H1 (cell line): ENCODE measurements at regions of chr1 and their contacts with region 1.

Region 1: GRCh38 chr1:206734499-206735142 is 36.0 kb upstream of the IL19 start:
- DNase-seq: peak in 1 of 2 experiments; percentile 94
- H3K4me3 ChIP-seq: no peak overlapping the region
- H3K27ac ChIP-seq: no peak overlapping the region
- H3K4me1 ChIP-seq: peaks cover 0 to 3% (median 0%) of the 10 kb centered on the region in 4 experiments; a peak in 2 of 7 replicates
- H3K27me3 ChIP-seq: no peaks in the 10 kb centered on the region
- CTCF ChIP-seq: peak; percentile 66 to 87 (median 86)
- EP300 ChIP-seq: no peak
- POLR2A ChIP-seq: no peak
- RAD21 ChIP-seq: peak; percentile 80 to 84

Region 2: GRCh38 chr1:206583707-206584648 is 150.6 kb before region 1 on chr1:
- CTCF ChIA-PET with region 1: no interaction called
- POLR2A ChIA-PET with region 1: no interaction called
- DNase-seq: peak; percentile 36 to 91
- H3K4me3 ChIP-seq: no peak overlapping the region
- H3K27ac ChIP-seq: no peak overlapping the region
- H3K4me1 ChIP-seq: no peaks in the 10 kb centered on the region
- H3K27me3 ChIP-seq: no peaks in the 10 kb centered on the region
- CTCF ChIP-seq: peak; percentile 86 to 88 (median 87)
- EP300 ChIP-seq: no peak
- POLR2A ChIP-seq: no peak
- RAD21 ChIP-seq: peak; percentile 89 to 91

Region 3: GRCh38 chr1:206685769-206686485 is 48.7 kb before region 1 on chr1:
- CTCF ChIA-PET with region 1: interaction called, 20 read pairs
- POLR2A ChIA-PET with region 1: no interaction called
- DNase-seq: no peak
- H3K4me3 ChIP-seq: peak overlapping the region; percentile 80 to 88 (median 82)
- H3K27ac ChIP-seq: peak overlapping the region; percentile 52; the same call in 1 of the 2 replicates
- H3K4me1 ChIP-seq: peaks cover 10 to 27% (median 15%) of the 10 kb centered on the region in 4 experiments
- H3K27me3 ChIP-seq: peaks cover 9 to 31% (median 26%) of the 10 kb centered on the region in 4 experiments
- CTCF ChIP-seq: no peak
- EP300 ChIP-seq: no peak
- POLR2A ChIP-seq: peak in 1 of 2 experiments; percentile 14; a peak in 1 of 3 replicates
- RAD21 ChIP-seq: no peak

Region 4: GRCh38 chr1:206714331-206715058 is 20.1 kb before region 1 on chr1:
- CTCF ChIA-PET with region 1: interaction called, 12 read pairs
- POLR2A ChIA-PET with region 1: no interaction called
- DNase-seq: no peak
- H3K4me3 ChIP-seq: no peak overlapping the region
- H3K27ac ChIP-seq: no peak overlapping the region
- H3K4me1 ChIP-seq: no peaks in the 10 kb centered on the region
- H3K27me3 ChIP-seq: no peaks in the 10 kb centered on the region
- CTCF ChIP-seq: no peak
- EP300 ChIP-seq: no peak
- POLR2A ChIP-seq: no peak
- RAD21 ChIP-seq: no peak

Region 5: DNA sequence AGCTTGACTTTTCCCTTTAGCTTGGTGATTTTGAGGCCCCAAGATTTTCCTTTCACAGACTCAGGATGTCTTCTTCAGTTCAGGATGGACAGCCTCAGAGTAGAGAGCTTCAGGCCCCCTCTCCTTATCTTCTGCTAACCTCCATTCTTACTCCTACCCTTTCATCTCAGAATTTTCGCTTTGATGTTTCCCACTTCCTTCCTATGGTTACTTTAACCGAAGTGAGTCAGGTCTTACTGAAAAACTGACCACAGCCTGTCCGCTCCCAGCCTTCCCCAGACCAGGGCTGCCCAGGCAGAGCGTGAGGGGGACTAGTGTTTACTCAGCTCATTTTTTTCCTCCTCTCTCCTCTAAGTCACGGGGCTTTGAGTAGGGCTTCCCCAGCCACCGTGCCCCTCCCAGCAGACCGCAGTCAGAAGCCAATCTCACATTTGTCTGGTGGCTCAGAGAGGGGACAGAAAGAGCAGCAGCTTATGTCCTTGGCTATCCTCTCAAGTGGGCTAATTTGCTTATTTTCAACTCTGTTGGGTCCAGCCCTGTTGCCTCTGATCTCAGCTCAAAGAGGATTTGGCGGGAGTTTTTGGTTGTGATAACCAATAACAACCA is 31.7 kb after region 1 on chr1:
- CTCF ChIA-PET with region 1: interaction called, 19 read pairs
- POLR2A ChIA-PET with region 1: no interaction called
- DNase-seq: no peak
- H3K4me3 ChIP-seq: no peak overlapping the region
- H3K27ac ChIP-seq: no peak overlapping the region
- H3K4me1 ChIP-seq: no peaks in the 10 kb centered on the region; a peak in 1 of 7 replicates
- H3K27me3 ChIP-seq: peaks cover 0 to 2% (median 0%) of the 10 kb centered on the region in 4 experiments; a peak in 1 of 7 replicates
- CTCF ChIP-seq: no peak
- EP300 ChIP-seq: no peak
- POLR2A ChIP-seq: no peak
- RAD21 ChIP-seq: no peak

Region 6: GRCh38 chr1:206803221-206803730 is 68.7 kb after region 1 on chr1:
- CTCF ChIA-PET with region 1: interaction called, 29 read pairs
- POLR2A ChIA-PET with region 1: no interaction called
- DNase-seq: no peak
- H3K4me3 ChIP-seq: no peak overlapping the region
- H3K27ac ChIP-seq: no peak overlapping the region
- H3K4me1 ChIP-seq: no peaks in the 10 kb centered on the region
- H3K27me3 ChIP-seq: no peaks in the 10 kb centered on the region
- CTCF ChIP-seq: no peak
- EP300 ChIP-seq: no peak
- POLR2A ChIP-seq: no peak
- RAD21 ChIP-seq: no peak

Region 7: GRCh38 chr1:206887701-206888100 is 153.1 kb after region 1 on chr1:
- CTCF ChIA-PET with region 1: interaction called, 11 read pairs
- POLR2A ChIA-PET with region 1: no interaction called
- DNase-seq: no peak
- H3K4me3 ChIP-seq: no peak overlapping the region
- H3K27ac ChIP-seq: no peak overlapping the region
- H3K4me1 ChIP-seq: peaks cover 0 to 3% (median 1%) of the 10 kb centered on the region in 4 experiments; a peak in 3 of 7 replicates
- H3K27me3 ChIP-seq: no peaks in the 10 kb centered on the region
- CTCF ChIP-seq: no peak
- EP300 ChIP-seq: no peak
- POLR2A ChIP-seq: no peak
- RAD21 ChIP-seq: no peak